MCF 10A (cell line): ENCODE measurements at regions of chr6 and their contacts with region 1.

Region 1: GRCh38 chr6:49142421-49143151 is 320.5 kb downstream of the MMUT start:
- DNase-seq: no peak
- H3K4me3 Mint-ChIP-seq: no peak overlapping the region
- H3K27ac Mint-ChIP-seq: no peak overlapping the region
- H3K4me1 Mint-ChIP-seq: no peaks in the 10 kb centered on the region
- H3K27me3 Mint-ChIP-seq: no peaks in the 10 kb centered on the region
- CTCF ChIP-seq: no peak

Region 2: GRCh38 chr6:48141961-48142360 is 1000.6 kb before region 1 on chr6:
- CTCF ChIA-PET with region 1: no interaction called
- POLR2A ChIA-PET with region 1: no interaction called
- intact Hi-C with region 1: loop called (anchors 5 kb)
- DNase-seq: peak; percentile 57
- H3K4me3 Mint-ChIP-seq: no peak overlapping the region
- H3K27ac Mint-ChIP-seq: peak overlapping the region; percentile 51
- H3K4me1 Mint-ChIP-seq: peaks cover 28% of the 10 kb centered on the region
- H3K27me3 Mint-ChIP-seq: no peaks in the 10 kb centered on the region
- CTCF ChIP-seq: no peak